Tibial artery (tissue), 4 donors: ENCODE measurements at regions of chr20 and their contacts with region 1.

Region 1: GRCh38 chr20:43583982-43584432 is 6.7 kb upstream of the IFT52 start:
- DNase-seq: peak; percentile 88 to 95
- H3K4me3 ChIP-seq: no peak overlapping the region
- H3K27ac ChIP-seq: peak overlapping the region; percentile 20 to 49
- H3K4me1 ChIP-seq: peaks cover 0 to 16% (median 3%) of the 10 kb centered on the region in 4 donors
- H3K27me3 ChIP-seq: no peaks in the 10 kb centered on the region
- CTCF ChIP-seq: no peak

Region 2: GRCh38 chr20:42401613-42402012 is 1182.4 kb before region 1 on chr20:
- intact Hi-C with region 1: no loop called
- DNase-seq: no peak
- H3K4me3 ChIP-seq: no peak overlapping the region
- H3K27ac ChIP-seq: no peak overlapping the region
- H3K4me1 ChIP-seq: no peaks in the 10 kb centered on the region
- H3K27me3 ChIP-seq: no peaks in the 10 kb centered on the region
- CTCF ChIP-seq: no peak

Region 3: GRCh38 chr20:43448748-43449535 is 135.1 kb before region 1 on chr20:
- intact Hi-C with region 1: no loop called
- DNase-seq: no peak
- H3K4me3 ChIP-seq: no peak overlapping the region
- H3K27ac ChIP-seq: no peak overlapping the region
- H3K4me1 ChIP-seq: no peaks in the 10 kb centered on the region
- H3K27me3 ChIP-seq: peaks cover 0 to 42% of the 10 kb centered on the region in 2 donors
- CTCF ChIP-seq: peak; percentile 51 to 56

Region 4: DNA sequence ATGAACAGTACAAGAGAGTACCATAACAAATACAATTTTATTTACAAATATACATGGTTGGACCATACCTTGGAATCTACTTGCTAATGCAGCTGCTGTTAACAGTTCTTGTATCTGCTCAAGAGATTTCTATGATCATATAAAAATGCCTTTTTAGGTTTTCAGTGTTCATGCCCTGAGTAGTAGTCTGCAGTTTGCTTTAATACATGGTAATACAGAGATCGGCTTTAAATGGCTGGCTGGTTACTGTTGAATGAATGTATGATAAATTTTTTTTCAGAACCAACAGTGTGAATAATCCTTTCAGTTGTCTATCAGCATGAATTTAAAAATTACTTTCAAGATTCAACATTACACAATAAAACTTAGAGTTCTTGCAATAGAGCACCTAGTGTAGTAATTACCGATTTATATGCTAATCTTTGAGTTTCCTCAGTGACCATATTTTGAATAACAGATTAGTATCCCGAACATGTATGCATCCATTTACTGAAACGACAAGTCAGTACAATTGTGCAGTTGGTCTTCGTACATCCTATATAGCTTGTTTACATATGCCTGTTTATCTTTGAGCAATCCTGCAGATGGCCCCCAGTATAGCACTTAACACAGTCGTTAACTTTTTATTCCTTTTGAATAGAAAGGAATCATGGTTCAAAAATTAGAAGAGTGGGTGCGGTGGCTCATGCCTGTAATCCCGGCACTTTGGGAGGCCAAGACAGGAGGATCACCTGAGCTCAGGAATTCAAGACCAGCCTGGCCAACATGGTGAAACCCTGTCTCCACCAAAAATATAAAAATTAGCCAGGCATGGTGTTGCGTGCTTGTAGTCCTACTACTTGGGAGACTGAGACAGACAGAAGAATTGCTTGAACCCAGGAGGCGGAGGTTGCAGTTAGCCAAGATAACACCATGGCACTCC is 119.9 kb before region 1 on chr20:
- intact Hi-C with region 1: loop called (anchors 5 kb)
- DNase-seq: no peak
- H3K4me3 ChIP-seq: no peak overlapping the region
- H3K27ac ChIP-seq: no peak overlapping the region
- H3K4me1 ChIP-seq: peaks cover 0 to 18% (median 10%) of the 10 kb centered on the region in 4 donors
- H3K27me3 ChIP-seq: no peaks in the 10 kb centered on the region
- CTCF ChIP-seq: no peak

Region 5: DNA sequence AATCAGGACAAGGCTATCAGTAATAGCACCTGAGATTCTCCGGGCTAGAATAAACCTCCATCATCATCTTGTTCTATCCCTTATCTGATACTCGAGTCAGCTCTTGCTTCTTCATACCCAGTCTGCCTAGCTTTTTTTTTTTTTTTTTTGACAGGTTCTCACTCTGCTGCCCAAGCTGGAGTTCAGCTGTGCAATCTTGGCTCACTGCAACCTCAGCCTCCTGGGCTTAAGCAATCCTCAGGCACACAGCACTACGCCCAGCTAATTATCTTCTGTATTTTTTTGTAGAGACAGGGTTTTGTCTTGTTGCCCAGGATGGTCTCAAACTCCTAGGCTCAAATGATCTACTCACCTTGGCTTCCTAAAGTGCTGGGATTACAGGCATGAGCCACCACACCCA is 106.8 kb before region 1 on chr20:
- intact Hi-C with region 1: no loop called
- DNase-seq: no peak
- H3K4me3 ChIP-seq: no peak overlapping the region
- H3K27ac ChIP-seq: no peak overlapping the region
- H3K4me1 ChIP-seq: peaks cover 0 to 8% (median 0%) of the 10 kb centered on the region in 4 donors
- H3K27me3 ChIP-seq: no peaks in the 10 kb centered on the region
- CTCF ChIP-seq: no peak

Region 6: GRCh38 chr20:43537921-43538877 is 45.8 kb before region 1 on chr20:
- intact Hi-C with region 1: loop called (anchors 10 kb)
- DNase-seq: peak; percentile 73
- H3K4me3 ChIP-seq: no peak overlapping the region
- H3K27ac ChIP-seq: no peak overlapping the region
- H3K4me1 ChIP-seq: no peaks in the 10 kb centered on the region
- H3K27me3 ChIP-seq: no peaks in the 10 kb centered on the region
- CTCF ChIP-seq: peak; percentile 79 to 85